ENCODE measurements at regions of chrX and their contacts with region 1.

Region 1: DNA sequence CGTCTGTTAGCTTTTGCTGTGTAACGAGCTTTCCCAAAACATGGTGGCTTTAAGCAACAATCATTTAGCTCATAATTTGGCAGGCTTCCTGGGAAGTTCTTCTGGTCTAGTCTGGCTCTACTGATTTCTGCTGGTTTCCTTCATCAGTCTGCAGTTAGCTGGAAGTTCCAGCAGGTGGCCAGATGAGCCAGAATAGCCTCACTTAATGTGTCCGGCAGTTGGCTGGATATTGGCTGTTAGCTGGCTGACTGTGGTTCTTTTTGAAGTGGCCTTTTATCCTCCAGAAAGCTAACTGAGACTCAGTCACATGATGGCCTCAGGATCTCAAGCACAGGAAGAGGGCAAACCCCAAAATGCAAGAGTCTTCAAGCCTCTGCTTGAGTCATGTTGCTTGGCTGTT is 34.9 kb downstream of the FTHL17 start:
- DNase-seq: peak; percentile 58
- H3K4me3 ChIP-seq: no peak overlapping the region
- H3K27ac ChIP-seq: no peak overlapping the region
- H3K4me1 ChIP-seq: no peaks in the 10 kb centered on the region
- H3K27me3 ChIP-seq: no peaks in the 10 kb centered on the region
- CTCF ChIP-seq: peak; percentile 72

Region 2: DNA sequence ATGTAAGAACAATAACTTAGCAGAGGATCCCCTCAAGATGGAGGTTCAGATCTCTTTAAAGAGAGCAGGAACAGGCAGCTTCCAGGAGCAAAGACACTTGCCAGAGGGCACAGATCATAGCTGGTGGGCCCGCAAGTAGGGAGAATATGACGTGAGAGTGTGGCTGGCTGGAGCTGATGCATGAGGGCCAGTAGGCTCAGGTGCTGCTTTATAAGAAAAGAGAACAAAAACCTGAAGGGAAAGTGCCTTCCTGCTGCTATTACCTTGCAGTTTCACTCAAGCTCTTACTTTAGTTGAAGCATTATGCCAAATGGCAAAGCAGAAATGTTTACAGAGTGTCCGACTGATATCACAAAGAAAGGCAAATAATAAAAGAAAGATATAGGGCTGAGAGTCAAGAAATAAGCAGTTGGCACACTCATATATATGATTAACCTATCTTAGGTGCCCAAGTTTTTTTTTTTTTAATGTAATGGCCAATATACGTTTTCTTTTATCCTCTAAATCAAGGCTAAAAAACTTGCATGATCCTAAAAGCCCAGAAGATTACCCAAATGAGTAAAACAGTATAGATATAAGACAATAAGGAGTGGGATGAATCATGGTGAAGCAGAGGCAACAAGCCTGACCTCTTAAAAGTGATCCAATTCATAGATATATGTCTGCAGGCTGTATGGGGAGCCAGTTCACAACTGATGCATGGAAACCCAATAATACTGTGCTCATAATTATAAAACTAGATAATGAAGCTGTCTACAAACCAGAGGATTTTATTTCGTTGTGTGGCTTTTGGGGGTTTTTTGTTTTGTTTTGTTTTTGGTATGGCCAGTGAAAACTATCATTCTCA is 740.3 kb before region 1 on chrX:
- CTCF ChIA-PET with region 1: no interaction called
- POLR2A ChIA-PET with region 1: no interaction called
- intact Hi-C with region 1: no loop called
- DNase-seq: no peak
- H3K4me3 ChIP-seq: no peak overlapping the region
- H3K27ac ChIP-seq: no peak overlapping the region
- H3K4me1 ChIP-seq: peaks cover 10% of the 10 kb centered on the region
- H3K27me3 ChIP-seq: no peaks in the 10 kb centered on the region
- CTCF ChIP-seq: no peak

Region 3: DNA sequence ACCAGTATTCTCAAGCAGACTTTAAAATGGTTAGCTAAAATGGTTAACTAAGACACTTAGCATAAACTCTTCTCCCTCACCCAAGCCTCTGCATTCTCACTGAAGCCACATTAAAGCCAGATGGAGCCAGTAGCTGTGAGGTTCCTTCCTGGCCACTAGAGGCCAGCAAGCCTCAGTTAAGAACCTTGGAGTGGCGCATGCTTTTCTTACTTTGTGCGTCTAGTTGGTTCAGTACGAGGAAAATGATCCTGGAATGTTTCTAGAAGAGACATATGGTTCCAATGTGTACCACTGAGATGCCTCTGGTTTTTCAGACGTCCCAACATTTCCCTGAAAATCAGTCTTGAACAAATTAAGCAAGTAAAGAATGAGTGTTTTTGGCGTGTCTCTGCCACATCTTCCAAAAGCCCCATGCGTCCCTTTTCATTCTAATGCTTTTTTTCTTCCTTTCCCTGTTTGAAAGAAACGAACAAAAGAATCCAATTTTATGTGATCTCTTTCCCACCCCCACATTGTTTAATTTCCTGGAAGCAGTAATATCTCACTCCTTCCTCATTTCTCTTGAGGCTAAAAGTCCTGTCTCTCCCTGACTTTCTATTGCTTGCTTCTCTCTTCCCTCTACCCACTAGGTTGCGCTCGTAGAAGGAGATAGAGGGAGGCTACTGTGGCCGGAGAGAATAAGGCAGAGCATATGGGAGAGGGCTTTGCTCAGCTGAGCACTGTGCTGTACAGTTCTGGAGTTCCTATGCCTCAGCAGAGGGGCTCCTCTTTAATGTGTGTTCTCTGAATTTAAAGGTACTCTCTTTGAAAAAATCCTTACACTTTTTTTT is 64.9 kb before region 1 on chrX:
- CTCF ChIA-PET with region 1: interaction called, 4 read pairs
- POLR2A ChIA-PET with region 1: no interaction called
- intact Hi-C with region 1: loop called (anchors 5 kb)
- DNase-seq: peak; percentile 66
- H3K4me3 ChIP-seq: peak overlapping the region; percentile 14
- H3K27ac ChIP-seq: no peak overlapping the region
- H3K4me1 ChIP-seq: no peaks in the 10 kb centered on the region
- H3K27me3 ChIP-seq: no peaks in the 10 kb centered on the region
- CTCF ChIP-seq: peak; percentile 80

Region 4: DNA sequence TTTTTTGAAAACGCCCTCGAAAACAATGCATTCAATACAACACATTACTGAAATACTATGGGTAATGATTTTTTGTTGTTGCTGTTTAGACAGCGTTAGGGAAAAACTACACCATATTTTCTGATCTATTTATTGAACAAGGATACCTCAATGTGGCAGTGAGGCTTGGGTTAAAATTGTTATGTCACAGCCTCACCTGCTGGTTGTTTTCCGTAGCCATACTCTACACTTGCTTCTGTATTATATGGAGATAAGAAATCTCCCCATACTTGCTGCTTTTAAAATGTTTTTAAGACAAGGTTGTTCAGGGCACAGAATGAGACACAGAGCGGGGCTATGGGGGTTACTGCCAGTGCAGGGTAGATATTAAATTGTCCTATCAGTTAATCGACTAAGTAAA is 256.5 kb after region 1 on chrX:
- CTCF ChIA-PET with region 1: interaction called, 3 read pairs
- POLR2A ChIA-PET with region 1: no interaction called
- intact Hi-C with region 1: loop called (anchors 5 kb)
- DNase-seq: no peak
- H3K4me3 ChIP-seq: no peak overlapping the region
- H3K27ac ChIP-seq: no peak overlapping the region
- H3K4me1 ChIP-seq: no peaks in the 10 kb centered on the region
- H3K27me3 ChIP-seq: no peaks in the 10 kb centered on the region
- CTCF ChIP-seq: peak; percentile 34; the same call in 1 of the 2 replicates

Region 5: GRCh38 chrX:31658360-31658759 is 621.5 kb after region 1 on chrX:
- CTCF ChIA-PET with region 1: interaction called, 3 read pairs
- POLR2A ChIA-PET with region 1: no interaction called
- intact Hi-C with region 1: loop called (anchors 1 kb)
- DNase-seq: peak; percentile 55
- H3K4me3 ChIP-seq: no peak overlapping the region
- H3K27ac ChIP-seq: no peak overlapping the region
- H3K4me1 ChIP-seq: no peaks in the 10 kb centered on the region
- H3K27me3 ChIP-seq: peaks cover 15% of the 10 kb centered on the region
- CTCF ChIP-seq: peak; percentile 66